ENCODE measurements at regions of chr12 and their contacts with region 1.

Region 1: GRCh38 chr12:54279866-54280467 is at the start of gene CBX5:
- DNase-seq: peak; percentile 100
- ATAC-seq: peak; percentile 44
- H3K4me3 ChIP-seq: peak within 1 kb of the TSS; percentile 79 to 99 (median 99)
- H3K4me3 Mint-ChIP-seq: no peak within 1 kb of the TSS
- H3K27ac ChIP-seq: peak within 1 kb of the TSS; percentile 96 to 97
- H3K27ac Mint-ChIP-seq: no peak within 1 kb of the TSS
- H3K4me1 ChIP-seq: peaks cover 50 to 54% of the 10 kb centered on the region in 2 donors
- H3K4me1 Mint-ChIP-seq: peaks cover 49% of the 10 kb centered on the region
- H3K27me3 ChIP-seq: no peaks in the 10 kb centered on the region
- H3K27me3 Mint-ChIP-seq: no peaks in the 10 kb centered on the region
- CTCF ChIP-seq: no peak
- total RNA-seq, gene CBX5: 64.8 and 66.2 TPM in 2 replicates

Region 2: GRCh38 chr12:53727310-53728041 is 552.5 kb before region 1 on chr12 and contains the start of gene CALCOCO1:
- CTCF ChIA-PET with region 1: no interaction called
- POLR2A ChIA-PET with region 1: no interaction called
- intact Hi-C with region 1: loop called (anchors 1 kb)
- DNase-seq: peak; percentile 98
- ATAC-seq: peak; percentile 97
- H3K4me3 ChIP-seq: peak within 1 kb of the TSS; percentile 51 to 96 (median 85)
- H3K4me3 Mint-ChIP-seq: peak within 1 kb of the TSS; percentile 91
- H3K27ac ChIP-seq: peak within 1 kb of the TSS; percentile 60 to 61
- H3K27ac Mint-ChIP-seq: peak within 1 kb of the TSS; percentile 82
- H3K4me1 ChIP-seq: peaks cover 13 to 21% of the 10 kb centered on the region in 2 donors
- H3K4me1 Mint-ChIP-seq: peaks cover 22% of the 10 kb centered on the region
- H3K27me3 ChIP-seq: no peaks in the 10 kb centered on the region
- H3K27me3 Mint-ChIP-seq: peaks cover 11% of the 10 kb centered on the region
- CTCF ChIP-seq: no peak
- total RNA-seq, gene CALCOCO1: 171 and 179 TPM in 2 replicates

Region 3: DNA sequence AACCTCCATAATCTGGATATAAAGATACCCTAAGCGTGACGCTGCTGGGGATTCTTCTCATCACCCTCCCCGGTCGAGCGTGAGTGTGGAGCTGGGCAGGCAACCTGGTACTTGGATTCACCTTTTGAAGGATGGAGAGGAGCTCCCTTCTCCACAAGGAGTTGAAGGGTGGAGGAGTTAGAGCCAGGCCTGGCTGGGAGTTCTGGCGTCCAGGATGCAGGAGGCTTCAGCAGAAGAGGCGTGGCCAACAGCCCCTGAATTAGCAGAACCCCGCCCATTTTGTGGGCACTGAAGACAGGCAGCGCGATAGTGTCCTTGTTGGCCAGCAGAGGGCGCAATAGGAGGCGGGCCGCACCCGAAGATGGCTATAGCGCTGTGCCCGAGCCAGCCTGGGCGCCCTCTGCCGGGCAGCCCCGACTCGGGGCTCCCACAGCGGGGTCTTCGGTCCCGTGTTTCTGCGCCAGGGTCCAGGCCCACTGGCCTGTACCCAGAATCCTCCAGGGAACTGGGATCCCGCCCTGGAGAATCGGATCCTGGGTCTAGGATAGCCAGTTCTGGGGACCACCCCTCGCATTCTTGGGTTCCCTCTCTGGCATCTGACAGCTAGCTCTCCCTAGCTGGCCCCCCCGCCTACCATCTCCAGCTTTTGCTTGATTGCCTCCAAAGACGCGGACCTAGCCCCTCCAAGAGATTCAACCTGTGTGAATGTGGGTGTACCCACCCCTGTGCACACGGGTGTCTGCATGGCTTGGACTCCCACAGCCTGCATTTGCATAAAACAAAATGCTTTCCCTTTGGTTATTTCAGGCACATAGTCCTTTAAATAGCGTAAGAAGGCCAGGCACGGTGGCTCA is 65.2 kb before region 1 on chr12:
- CTCF ChIA-PET with region 1: interaction called, 6 read pairs
- POLR2A ChIA-PET with region 1: no interaction called
- intact Hi-C with region 1: loop called (anchors 1 kb)
- DNase-seq: peak; percentile 95
- ATAC-seq: peak; percentile 83
- H3K4me3 ChIP-seq: peak overlapping the region; percentile 3 to 58 (median 46)
- H3K4me3 Mint-ChIP-seq: peak overlapping the region; percentile 90
- H3K27ac ChIP-seq: no peak overlapping the region
- H3K27ac Mint-ChIP-seq: peak overlapping the region; percentile 33
- H3K4me1 ChIP-seq: peaks cover 36 to 46% of the 10 kb centered on the region in 2 donors
- H3K4me1 Mint-ChIP-seq: peaks cover 44% of the 10 kb centered on the region
- H3K27me3 ChIP-seq: peaks cover 0 to 30% (median 6%) of the 10 kb centered on the region in 4 experiments
- H3K27me3 Mint-ChIP-seq: peaks cover 6% of the 10 kb centered on the region
- CTCF ChIP-seq: peak; percentile 100

Region 4: DNA sequence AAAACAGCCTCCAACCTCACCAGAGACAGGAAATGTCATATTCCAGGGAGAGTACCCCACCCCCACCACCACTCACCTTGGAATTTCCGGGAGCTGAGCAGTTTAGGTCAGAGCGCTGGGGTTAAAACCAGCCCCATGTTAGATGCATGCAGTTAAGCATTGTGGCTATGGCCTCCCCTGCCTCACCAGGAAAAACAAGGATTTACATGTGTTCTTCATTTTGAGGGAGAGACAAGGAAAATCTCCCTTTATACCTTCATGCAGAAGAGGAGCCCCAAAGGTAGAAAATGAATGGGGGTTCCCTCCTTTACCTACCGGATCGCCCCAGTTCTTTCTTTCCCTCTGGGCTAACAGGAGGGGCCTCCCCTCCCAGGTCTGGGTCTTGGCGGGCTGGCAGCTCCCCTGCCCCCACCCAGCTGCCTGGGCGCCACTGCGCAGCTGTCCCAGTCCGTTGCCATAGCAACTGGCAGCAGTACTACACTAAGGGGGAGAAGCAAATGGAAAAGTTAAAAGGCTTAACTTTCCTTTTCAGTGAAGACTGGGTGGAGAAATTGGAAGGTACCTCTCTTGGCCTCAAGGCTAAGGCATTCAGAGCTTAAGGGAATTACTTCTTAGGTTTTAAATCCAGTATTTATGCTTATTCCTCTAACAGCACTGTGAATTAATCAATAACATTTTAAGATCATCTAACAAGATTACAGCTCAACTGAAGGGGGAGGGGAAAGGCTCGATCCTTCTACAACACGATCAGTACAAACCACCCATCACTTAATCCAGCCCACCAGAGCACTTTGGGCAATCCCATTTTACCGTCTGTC is 20.6 kb before region 1 on chr12:
- CTCF ChIA-PET with region 1: interaction called, 4 read pairs
- POLR2A ChIA-PET with region 1: interaction called, 19 read pairs
- intact Hi-C with region 1: loop called (anchors 1 kb)
- DNase-seq: peak; percentile 80
- ATAC-seq: peak; percentile 94
- H3K4me3 ChIP-seq: peak overlapping the region; percentile 35 to 62 (median 46)
- H3K4me3 Mint-ChIP-seq: peak overlapping the region; percentile 88
- H3K27ac ChIP-seq: peak overlapping the region in 1 of 2 donors; percentile 81
- H3K27ac Mint-ChIP-seq: peak overlapping the region; percentile 86
- H3K4me1 ChIP-seq: peaks cover 17 to 23% of the 10 kb centered on the region in 2 donors
- H3K4me1 Mint-ChIP-seq: peaks cover 26% of the 10 kb centered on the region
- H3K27me3 ChIP-seq: no peaks in the 10 kb centered on the region
- H3K27me3 Mint-ChIP-seq: no peaks in the 10 kb centered on the region
- CTCF ChIP-seq: no peak

Region 5: GRCh38 chr12:54324617-54325441 is 44.9 kb after region 1 on chr12 and contains the start of gene COPZ1:
- CTCF ChIA-PET with region 1: interaction called, 22 read pairs
- POLR2A ChIA-PET with region 1: interaction called, 23 read pairs
- intact Hi-C with region 1: loop called (anchors 1 kb)
- DNase-seq: peak; percentile 97
- ATAC-seq: peak; percentile 93
- H3K4me3 ChIP-seq: peak within 1 kb of the TSS; percentile 54 to 97 (median 87)
- H3K4me3 Mint-ChIP-seq: peak within 1 kb of the TSS; percentile 94
- H3K27ac ChIP-seq: peak within 1 kb of the TSS; percentile 76 to 89
- H3K27ac Mint-ChIP-seq: peak within 1 kb of the TSS; percentile 96
- H3K4me1 ChIP-seq: peaks cover 9 to 11% of the 10 kb centered on the region in 2 donors
- H3K4me1 Mint-ChIP-seq: peaks cover 30% of the 10 kb centered on the region
- H3K27me3 ChIP-seq: no peaks in the 10 kb centered on the region
- H3K27me3 Mint-ChIP-seq: no peaks in the 10 kb centered on the region
- CTCF ChIP-seq: peak; percentile 85
- total RNA-seq, gene COPZ1: 72.1 and 78.2 TPM in 2 replicates

Region 6: GRCh38 chr12:54390668-54391551 is 110.9 kb after region 1 on chr12:
- CTCF ChIA-PET with region 1: interaction called, 3 read pairs
- POLR2A ChIA-PET with region 1: interaction called, 10 read pairs
- intact Hi-C with region 1: no loop called
- DNase-seq: peak; percentile 85
- ATAC-seq: peak; percentile 95
- H3K4me3 ChIP-seq: peak overlapping the region; percentile 30 to 74 (median 62)
- H3K4me3 Mint-ChIP-seq: peak overlapping the region; percentile 90
- H3K27ac ChIP-seq: peak overlapping the region; percentile 45 to 63
- H3K27ac Mint-ChIP-seq: peak overlapping the region; percentile 85
- H3K4me1 ChIP-seq: peaks cover 62 to 70% of the 10 kb centered on the region in 2 donors
- H3K4me1 Mint-ChIP-seq: peaks cover 63% of the 10 kb centered on the region
- H3K27me3 ChIP-seq: no peaks in the 10 kb centered on the region
- H3K27me3 Mint-ChIP-seq: no peaks in the 10 kb centered on the region
- CTCF ChIP-seq: no peak

Region 7: GRCh38 chr12:54497883-54498282 is 217.9 kb after region 1 on chr12:
- CTCF ChIA-PET with region 1: no interaction called
- POLR2A ChIA-PET with region 1: no interaction called
- intact Hi-C with region 1: loop called (anchors 5 kb)
- DNase-seq: no peak
- ATAC-seq: peak; percentile 3
- H3K4me3 ChIP-seq: peak overlapping the region; percentile 76 to 97 (median 93)
- H3K4me3 Mint-ChIP-seq: peak overlapping the region; percentile 100
- H3K27ac ChIP-seq: peak overlapping the region; percentile 46 to 80
- H3K27ac Mint-ChIP-seq: peak overlapping the region; percentile 99
- H3K4me1 ChIP-seq: peaks cover 31 to 35% of the 10 kb centered on the region in 2 donors
- H3K4me1 Mint-ChIP-seq: peaks cover 46% of the 10 kb centered on the region
- H3K27me3 ChIP-seq: no peaks in the 10 kb centered on the region
- H3K27me3 Mint-ChIP-seq: no peaks in the 10 kb centered on the region
- CTCF ChIP-seq: no peak